ENCODE measurements at regions of chr4 and their contacts with region 1.

Region 1: DNA sequence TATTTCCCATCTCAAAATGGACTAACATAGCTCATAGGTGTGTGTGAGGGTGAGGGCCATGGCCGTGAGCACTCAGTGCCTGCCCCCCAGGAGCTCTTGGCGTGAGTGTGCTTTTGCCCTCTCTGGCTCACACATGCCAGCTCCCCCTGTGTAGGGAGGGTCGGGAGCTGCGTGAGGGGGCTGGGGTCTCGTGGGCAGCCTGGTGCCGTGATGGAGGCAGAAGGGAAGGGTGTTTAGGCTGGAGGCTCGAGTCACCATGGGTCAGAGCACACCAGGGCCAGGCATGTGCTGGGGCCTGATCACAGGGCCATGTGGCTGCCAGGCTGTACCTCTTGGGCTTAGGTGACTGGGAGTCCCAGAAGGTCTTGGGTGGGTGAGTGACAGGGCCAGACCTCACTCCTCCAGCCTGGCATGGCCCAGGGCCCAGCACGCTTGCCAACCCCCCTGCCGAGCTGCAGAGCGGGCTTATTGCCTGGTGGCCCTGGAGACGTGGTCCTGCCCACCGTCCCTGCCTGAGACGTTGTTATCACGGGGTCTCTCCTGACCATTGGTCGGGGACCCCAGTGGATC is 44.0 kb downstream of the ADRA2C start:
- DNase-seq: no peak
- H3K4me3 ChIP-seq: no peak overlapping the region
- H3K27ac ChIP-seq: no peak overlapping the region
- H3K4me1 ChIP-seq: no peaks in the 10 kb centered on the region
- H3K27me3 ChIP-seq: peaks cover 0 to 44% of the 10 kb centered on the region in 2 donors
- CTCF ChIP-seq: no peak
- POLR2A ChIP-seq: no peak

Region 2: GRCh38 chr4:2036866-2037265 is 1773.3 kb before region 1 on chr4:
- intact Hi-C with region 1: no loop called
- DNase-seq: no peak
- H3K4me3 ChIP-seq: no peak overlapping the region
- H3K27ac ChIP-seq: no peak overlapping the region
- H3K4me1 ChIP-seq: peaks cover 5 to 12% of the 10 kb centered on the region in 2 donors
- H3K27me3 ChIP-seq: peaks cover 0 to 16% of the 10 kb centered on the region in 2 donors
- CTCF ChIP-seq: no peak
- POLR2A ChIP-seq: no peak

Region 3: GRCh38 chr4:3797831-3798790 is 12.1 kb before region 1 on chr4:
- intact Hi-C with region 1: loop called (anchors 1 kb)
- DNase-seq: no peak
- H3K4me3 ChIP-seq: no peak overlapping the region
- H3K27ac ChIP-seq: no peak overlapping the region
- H3K4me1 ChIP-seq: no peaks in the 10 kb centered on the region
- H3K27me3 ChIP-seq: peaks cover 0 to 32% of the 10 kb centered on the region in 2 donors
- CTCF ChIP-seq: no peak
- POLR2A ChIP-seq: no peak

Region 4: DNA sequence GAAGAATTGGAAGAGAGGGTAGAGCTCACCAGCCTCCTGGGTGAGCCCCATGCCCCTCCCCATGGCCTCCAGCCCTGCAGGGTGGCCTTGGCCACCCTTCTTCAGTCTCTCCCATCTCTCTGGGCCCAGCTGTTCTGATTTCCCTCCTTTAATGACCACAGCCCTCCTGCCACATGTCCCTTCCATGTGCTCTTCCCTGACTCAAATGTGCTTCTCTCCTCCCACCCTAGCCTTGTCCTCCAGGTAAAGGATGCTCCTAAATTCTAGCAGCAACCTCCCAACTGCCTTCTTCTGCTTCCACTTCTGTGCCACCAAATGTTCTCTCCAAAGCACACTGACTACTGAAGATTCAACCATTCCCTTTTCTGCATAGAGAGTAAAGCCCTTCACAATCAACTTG is 38.9 kb after region 1 on chr4:
- intact Hi-C with region 1: loop called (anchors 1 kb)
- DNase-seq: no peak
- H3K4me3 ChIP-seq: no peak overlapping the region
- H3K27ac ChIP-seq: no peak overlapping the region
- H3K4me1 ChIP-seq: no peaks in the 10 kb centered on the region
- H3K27me3 ChIP-seq: peaks cover 0 to 16% of the 10 kb centered on the region in 2 donors
- CTCF ChIP-seq: no peak
- POLR2A ChIP-seq: no peak